ENCODE measurements at regions of chr2 and their contacts with region 1.

Region 1: GRCh38 chr2:172806493-172806892 is 70.8 kb downstream of the RAPGEF4 start:
- DNase-seq: no peak
- H3K4me3 ChIP-seq: no peak overlapping the region
- H3K27ac ChIP-seq: peak overlapping the region in 1 of 2 donors; percentile 22
- H3K4me1 ChIP-seq: no peaks in the 10 kb centered on the region
- H3K27me3 ChIP-seq: no peaks in the 10 kb centered on the region
- CTCF ChIP-seq: peak; percentile 74 to 84 (median 82)
- POLR2A ChIP-seq: no peak

Region 2: DNA sequence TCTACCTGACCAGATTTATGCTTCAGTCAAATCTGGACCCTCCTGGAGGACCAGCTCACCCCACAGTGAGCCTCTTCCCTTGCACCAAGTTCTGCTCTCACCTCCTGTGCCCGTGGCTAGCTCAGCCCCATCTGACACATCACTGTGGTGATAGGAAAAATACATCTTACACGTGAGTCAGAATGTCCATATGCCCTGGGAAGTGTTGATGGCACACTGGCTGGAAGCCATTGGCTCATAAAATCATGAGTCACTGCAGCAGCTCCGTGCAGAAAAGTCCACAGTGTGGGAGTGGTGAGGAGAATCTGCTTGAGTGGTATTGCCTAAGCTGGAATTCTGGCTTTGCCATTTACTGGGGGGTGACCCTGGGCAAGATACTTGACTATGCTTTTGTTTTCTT is 113.5 kb before region 1 on chr2:
- intact Hi-C with region 1: no loop called
- DNase-seq: peak; percentile 79 to 89
- H3K4me3 ChIP-seq: no peak overlapping the region
- H3K27ac ChIP-seq: peak overlapping the region in 1 of 2 donors; percentile 37
- H3K4me1 ChIP-seq: no peaks in the 10 kb centered on the region
- H3K27me3 ChIP-seq: no peaks in the 10 kb centered on the region
- CTCF ChIP-seq: no peak
- POLR2A ChIP-seq: no peak

Region 3: DNA sequence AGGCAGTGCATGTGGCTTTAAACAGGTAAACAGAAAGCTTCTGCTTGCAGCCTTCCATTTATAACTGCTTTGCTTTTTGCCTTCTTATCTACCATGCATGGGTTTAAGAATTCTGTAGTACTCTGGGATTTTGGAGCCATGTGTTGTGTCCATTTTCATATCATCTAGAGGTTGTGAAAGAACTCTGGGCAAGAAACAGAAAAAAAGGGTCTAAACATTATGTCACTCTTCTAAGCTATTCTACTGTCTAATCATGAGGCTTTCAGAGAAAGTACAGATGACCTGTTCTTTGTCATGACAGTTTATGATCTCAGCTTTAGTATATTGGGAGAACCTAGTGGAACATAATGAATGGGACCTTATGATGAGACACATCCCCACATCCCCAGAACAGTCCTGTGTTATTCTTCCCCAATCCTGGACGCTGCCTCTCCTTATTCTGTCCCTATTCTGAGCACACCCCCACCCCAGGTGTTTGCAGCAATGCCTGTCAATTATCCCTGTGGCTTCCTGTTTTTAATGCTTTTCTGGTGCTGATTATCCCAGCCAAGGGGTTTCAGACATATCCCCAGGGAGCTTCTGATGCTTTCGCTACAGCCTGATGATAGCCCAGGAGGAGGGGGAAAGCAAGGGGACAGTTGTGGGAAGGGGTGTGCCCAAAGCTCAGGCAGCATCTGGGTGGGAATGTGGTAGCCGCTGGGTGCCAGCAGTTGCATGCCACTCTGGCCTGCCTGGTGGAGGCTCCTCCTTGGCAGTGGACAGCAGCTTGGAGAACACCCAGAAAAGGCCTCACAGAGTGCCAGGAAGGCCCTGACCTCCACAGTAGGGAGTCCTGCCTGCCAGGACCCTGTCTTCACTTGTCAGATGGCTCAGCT is 99.7 kb after region 1 on chr2:
- intact Hi-C with region 1: no loop called
- DNase-seq: no peak
- H3K4me3 ChIP-seq: no peak overlapping the region
- H3K27ac ChIP-seq: no peak overlapping the region
- H3K4me1 ChIP-seq: no peaks in the 10 kb centered on the region
- H3K27me3 ChIP-seq: no peaks in the 10 kb centered on the region
- CTCF ChIP-seq: no peak
- POLR2A ChIP-seq: no peak

Region 4: GRCh38 chr2:172931918-172932520 is 125.5 kb after region 1 on chr2:
- intact Hi-C with region 1: loop called (anchors 10 kb)
- DNase-seq: peak; percentile 49 to 70
- H3K4me3 ChIP-seq: no peak overlapping the region
- H3K27ac ChIP-seq: peak overlapping the region; percentile 22 to 73
- H3K4me1 ChIP-seq: no peaks in the 10 kb centered on the region
- H3K27me3 ChIP-seq: no peaks in the 10 kb centered on the region
- CTCF ChIP-seq: peak; percentile 72 to 80 (median 72)
- POLR2A ChIP-seq: no peak

Measured in uterus (tissue), 4 donors.